PC-3 (cell line): ENCODE measurements at regions of chr3 and their contacts with region 1.

Region 1: GRCh38 chr3:121295966-121296365 is 249.8 kb downstream of the POLQ start:
- DNase-seq: peak; percentile 93
- ATAC-seq: peak; percentile 83
- H3K4me3 ChIP-seq: no peak overlapping the region
- H3K27ac ChIP-seq: peak overlapping the region; percentile 77
- H3K4me1 ChIP-seq: peaks cover 25% of the 10 kb centered on the region
- H3K27me3 ChIP-seq: peaks cover 7% of the 10 kb centered on the region; the same call in 1 of the 2 replicates
- CTCF ChIP-seq: no peak

Region 2: DNA sequence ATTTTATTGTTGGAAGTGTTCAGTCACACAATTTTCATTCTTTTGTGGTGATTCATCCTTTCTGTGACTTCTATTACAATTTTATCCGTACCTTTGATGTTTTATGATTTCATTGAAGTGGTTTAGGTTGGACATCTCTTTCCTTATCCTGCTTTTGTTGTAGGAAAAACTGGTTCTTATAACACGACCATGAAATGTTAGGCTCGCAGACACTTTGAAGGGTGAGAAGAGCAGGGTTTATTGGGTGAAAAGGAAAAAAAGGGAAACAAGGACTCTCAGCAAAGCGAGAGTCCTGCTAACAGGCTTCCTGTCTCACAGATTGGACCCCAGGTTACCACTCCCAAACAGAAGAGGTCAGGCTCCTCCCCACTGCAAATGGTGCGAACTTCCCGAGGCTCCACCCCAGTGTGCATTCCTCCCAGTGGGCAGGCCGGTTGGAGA is 130.5 kb before region 1 on chr3:
- CTCF ChIA-PET with region 1: no interaction called
- POLR2A ChIA-PET with region 1: no interaction called
- intact Hi-C with region 1: loop called (anchors 10 kb)
- DNase-seq: peak; percentile 66
- ATAC-seq: peak; percentile 48
- H3K4me3 ChIP-seq: no peak overlapping the region
- H3K27ac ChIP-seq: no peak overlapping the region
- H3K4me1 ChIP-seq: peaks cover 8% of the 10 kb centered on the region
- H3K27me3 ChIP-seq: no peaks in the 10 kb centered on the region
- CTCF ChIP-seq: no peak

Region 3: GRCh38 chr3:121232309-121233225 is 63.4 kb before region 1 on chr3:
- CTCF ChIA-PET with region 1: no interaction called
- POLR2A ChIA-PET with region 1: no interaction called
- intact Hi-C with region 1: loop called (anchors 1 kb)
- DNase-seq: no peak
- ATAC-seq: no peak
- H3K4me3 ChIP-seq: no peak overlapping the region
- H3K27ac ChIP-seq: no peak overlapping the region
- H3K4me1 ChIP-seq: peaks cover 10% of the 10 kb centered on the region
- H3K27me3 ChIP-seq: peaks cover 18% of the 10 kb centered on the region
- CTCF ChIP-seq: no peak

Region 4: DNA sequence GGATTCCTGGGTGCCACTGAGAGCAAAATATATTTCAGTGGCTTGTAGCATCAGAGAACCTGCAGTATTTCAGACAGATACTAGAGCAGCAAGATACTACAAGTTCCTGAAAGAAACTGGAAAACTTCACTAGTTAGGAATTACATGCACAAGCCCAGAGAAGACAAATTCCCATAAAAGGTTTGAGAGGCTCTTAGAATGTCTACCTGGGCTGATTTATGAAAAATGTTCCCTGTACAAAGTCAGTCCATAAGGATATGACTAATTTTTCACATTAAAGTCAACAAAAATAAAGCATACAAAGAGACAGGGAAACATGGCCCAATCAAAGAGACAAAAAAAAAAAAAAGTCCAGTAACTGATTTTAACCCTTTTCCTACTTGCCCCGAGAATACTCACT is 52.8 kb before region 1 on chr3:
- CTCF ChIA-PET with region 1: no interaction called
- POLR2A ChIA-PET with region 1: no interaction called
- intact Hi-C with region 1: loop called (anchors 1 kb)
- DNase-seq: peak; percentile 45
- ATAC-seq: peak; percentile 84
- H3K4me3 ChIP-seq: no peak overlapping the region
- H3K27ac ChIP-seq: no peak overlapping the region
- H3K4me1 ChIP-seq: peaks cover 10% of the 10 kb centered on the region
- H3K27me3 ChIP-seq: no peaks in the 10 kb centered on the region
- CTCF ChIP-seq: no peak

Region 5: DNA sequence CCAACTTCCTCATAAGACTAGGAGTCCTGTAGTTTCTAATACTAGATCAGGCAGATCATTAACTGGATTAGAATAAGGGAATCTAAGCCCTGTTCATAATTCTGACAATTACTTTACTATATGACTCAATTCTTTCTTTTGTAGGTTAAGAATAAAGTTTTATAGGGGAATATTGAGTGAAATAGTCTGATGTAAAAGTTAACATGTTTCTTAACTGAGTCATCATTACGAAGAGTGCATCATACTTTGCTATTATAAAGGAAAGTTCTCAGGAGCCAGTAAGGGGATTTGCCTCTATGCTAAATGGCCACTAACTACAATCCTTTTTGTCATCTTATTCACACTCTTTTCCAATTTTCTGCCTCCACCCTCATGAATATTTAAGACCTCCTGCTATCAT is 186.7 kb after region 1 on chr3:
- CTCF ChIA-PET with region 1: no interaction called
- POLR2A ChIA-PET with region 1: no interaction called
- intact Hi-C with region 1: loop called (anchors 5 kb)
- DNase-seq: peak; percentile 82
- ATAC-seq: peak; percentile 91
- H3K4me3 ChIP-seq: no peak overlapping the region
- H3K27ac ChIP-seq: peak overlapping the region; percentile 61
- H3K4me1 ChIP-seq: peaks cover 12% of the 10 kb centered on the region
- H3K27me3 ChIP-seq: no peaks in the 10 kb centered on the region
- CTCF ChIP-seq: no peak